ENCODE measurements at regions of chr19 and their contacts with region 1.

Region 1: GRCh38 chr19:12847159-12848139 is 9.1 kb downstream of the MAST1 start:
- DNase-seq: peak; percentile 43 to 93
- H3K4me3 ChIP-seq: peak overlapping the region in 1 of 2 donors; percentile 42
- H3K27ac ChIP-seq: no peak overlapping the region
- H3K4me1 ChIP-seq: peaks cover 0 to 9% of the 10 kb centered on the region in 2 donors
- H3K27me3 ChIP-seq: no peaks in the 10 kb centered on the region
- CTCF ChIP-seq: peak; percentile 99 to 100 (median 100)

Region 2: DNA sequence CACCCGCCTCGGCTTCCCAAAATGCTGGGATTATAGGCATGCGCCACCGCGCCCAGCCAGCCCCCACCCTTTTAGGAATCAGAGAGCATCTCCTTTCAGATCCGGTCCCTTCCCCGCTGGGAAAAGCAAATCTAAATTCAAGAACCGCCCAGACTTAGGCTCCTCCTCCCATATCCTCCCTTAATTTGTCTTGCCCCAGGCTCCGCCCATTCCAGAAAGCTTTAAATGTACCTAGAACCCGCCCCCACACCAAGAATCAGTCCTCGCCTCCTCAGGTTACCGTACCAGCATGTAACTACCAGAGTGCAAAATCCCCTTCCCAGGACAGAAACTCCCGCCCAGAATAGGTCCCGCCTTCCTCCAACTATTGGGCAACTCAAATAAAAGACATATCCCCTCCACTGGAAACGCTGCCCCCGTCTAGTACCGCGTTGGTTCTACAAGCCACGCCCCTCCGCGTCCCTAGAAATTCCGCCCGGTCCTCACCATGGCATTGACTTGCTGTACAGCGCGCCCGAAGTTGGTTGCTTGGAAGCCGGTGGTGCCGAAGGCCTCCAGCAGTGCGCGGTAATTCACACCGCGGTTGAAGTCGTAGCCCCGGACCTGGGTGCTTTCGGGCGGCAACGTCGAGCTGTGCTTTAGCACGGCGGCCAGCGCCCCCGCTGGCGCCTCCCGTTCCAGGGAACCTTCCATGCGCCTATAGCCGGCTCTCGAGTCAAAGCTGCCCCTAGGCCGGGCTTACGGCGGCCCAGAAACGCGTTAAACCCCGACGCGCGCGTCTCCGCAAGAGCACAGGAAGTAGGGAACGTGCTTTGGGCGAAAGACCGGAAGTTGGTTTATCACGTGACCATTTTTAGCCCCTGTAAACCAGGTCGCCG is 166.1 kb before region 1 on chr19 and contains the start of gene DHPS:
- intact Hi-C with region 1: loop called (anchors 2 kb)
- DNase-seq: peak; percentile 54 to 97
- H3K4me3 ChIP-seq: peak within 1 kb of the TSS; percentile 82 to 99
- H3K27ac ChIP-seq: peak within 1 kb of the TSS; percentile 93 to 98
- H3K4me1 ChIP-seq: peaks cover 0 to 9% of the 10 kb centered on the region in 2 donors
- H3K27me3 ChIP-seq: no peaks in the 10 kb centered on the region
- CTCF ChIP-seq: no peak
- total RNA-seq, gene DHPS: 160 TPM

Region 3: GRCh38 chr19:12766051-12766521 is 81.4 kb before region 1 on chr19:
- intact Hi-C with region 1: loop called (anchors 1 kb)
- DNase-seq: peak in 1 of 2 donors; percentile 91
- H3K4me3 ChIP-seq: peak overlapping the region; percentile 46 to 68
- H3K27ac ChIP-seq: peak overlapping the region; percentile 46 to 58
- H3K4me1 ChIP-seq: peaks cover 0 to 3% of the 10 kb centered on the region in 2 donors
- H3K27me3 ChIP-seq: no peaks in the 10 kb centered on the region
- CTCF ChIP-seq: peak; percentile 90 to 98 (median 94)

Region 4: GRCh38 chr19:12806239-12807081 is 41.0 kb before region 1 on chr19 and contains the start of gene RNASEH2A:
- intact Hi-C with region 1: loop called (anchors 2 kb)
- DNase-seq: peak in 1 of 2 donors; percentile 94
- H3K4me3 ChIP-seq: peak within 1 kb of the TSS; percentile 61 to 71
- H3K27ac ChIP-seq: peak within 1 kb of the TSS; percentile 6 to 31
- H3K4me1 ChIP-seq: peaks cover 3 to 8% of the 10 kb centered on the region in 2 donors
- H3K27me3 ChIP-seq: no peaks in the 10 kb centered on the region
- CTCF ChIP-seq: peak in 1 of 3 experiments; percentile 6
- total RNA-seq, gene RNASEH2A: 3.4 TPM

Region 5: DNA sequence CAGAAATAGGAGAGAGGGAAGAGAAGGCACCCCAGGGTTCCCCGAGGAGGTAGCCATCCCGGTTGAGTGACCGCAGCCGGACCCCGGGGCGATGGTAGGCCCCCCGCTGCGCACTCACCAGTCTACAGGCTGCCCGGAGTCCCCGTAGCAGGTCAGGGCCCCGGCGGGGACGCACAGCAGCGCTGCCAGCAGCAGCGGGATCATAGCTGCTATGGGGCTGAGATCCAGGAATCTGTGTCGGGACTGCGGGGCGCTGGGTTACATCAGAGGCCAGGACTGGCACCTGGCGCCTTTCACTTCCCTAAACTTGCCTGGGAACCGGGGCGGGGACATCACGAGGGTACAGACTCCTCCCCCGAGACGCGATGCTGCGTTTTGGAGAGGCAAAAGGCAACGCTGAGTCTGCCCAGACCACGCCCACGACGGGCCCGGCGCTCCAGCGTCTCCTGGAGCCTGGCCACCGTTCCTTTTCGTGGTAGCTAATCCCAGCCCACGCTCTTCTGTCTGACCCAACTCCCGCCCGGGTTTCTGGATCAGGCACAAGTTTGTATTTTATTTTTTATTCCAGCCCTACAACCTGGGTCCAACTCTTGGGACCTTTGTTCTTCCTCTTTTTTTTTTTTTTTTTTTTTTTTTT is 33.8 kb after region 1 on chr19 and contains the start of gene DNASE2:
- intact Hi-C with region 1: loop called (anchors 2 kb)
- DNase-seq: peak; percentile 91 to 98
- H3K4me3 ChIP-seq: peak within 1 kb of the TSS; percentile 61 to 74
- H3K27ac ChIP-seq: peak within 1 kb of the TSS; percentile 76 to 92
- H3K4me1 ChIP-seq: peaks cover 3 to 18% of the 10 kb centered on the region in 2 donors
- H3K27me3 ChIP-seq: peaks cover 13% of the 10 kb centered on the region
- CTCF ChIP-seq: no peak
- total RNA-seq, gene DNASE2: 76.8 TPM

Region 6: GRCh38 chr19:12938234-12939025 is 91.0 kb after region 1 on chr19 and contains the start of gene CALR:
- intact Hi-C with region 1: no loop called
- DNase-seq: peak; percentile 100
- H3K4me3 ChIP-seq: peak within 1 kb of the TSS; percentile 92 to 98
- H3K27ac ChIP-seq: peak within 1 kb of the TSS; percentile 89 to 95
- H3K4me1 ChIP-seq: peaks cover 15 to 41% of the 10 kb centered on the region in 2 donors
- H3K27me3 ChIP-seq: no peaks in the 10 kb centered on the region
- CTCF ChIP-seq: peak in 2 of 3 experiments; percentile 22 to 54
- total RNA-seq, gene CALR: 297 TPM

Region 7: DNA sequence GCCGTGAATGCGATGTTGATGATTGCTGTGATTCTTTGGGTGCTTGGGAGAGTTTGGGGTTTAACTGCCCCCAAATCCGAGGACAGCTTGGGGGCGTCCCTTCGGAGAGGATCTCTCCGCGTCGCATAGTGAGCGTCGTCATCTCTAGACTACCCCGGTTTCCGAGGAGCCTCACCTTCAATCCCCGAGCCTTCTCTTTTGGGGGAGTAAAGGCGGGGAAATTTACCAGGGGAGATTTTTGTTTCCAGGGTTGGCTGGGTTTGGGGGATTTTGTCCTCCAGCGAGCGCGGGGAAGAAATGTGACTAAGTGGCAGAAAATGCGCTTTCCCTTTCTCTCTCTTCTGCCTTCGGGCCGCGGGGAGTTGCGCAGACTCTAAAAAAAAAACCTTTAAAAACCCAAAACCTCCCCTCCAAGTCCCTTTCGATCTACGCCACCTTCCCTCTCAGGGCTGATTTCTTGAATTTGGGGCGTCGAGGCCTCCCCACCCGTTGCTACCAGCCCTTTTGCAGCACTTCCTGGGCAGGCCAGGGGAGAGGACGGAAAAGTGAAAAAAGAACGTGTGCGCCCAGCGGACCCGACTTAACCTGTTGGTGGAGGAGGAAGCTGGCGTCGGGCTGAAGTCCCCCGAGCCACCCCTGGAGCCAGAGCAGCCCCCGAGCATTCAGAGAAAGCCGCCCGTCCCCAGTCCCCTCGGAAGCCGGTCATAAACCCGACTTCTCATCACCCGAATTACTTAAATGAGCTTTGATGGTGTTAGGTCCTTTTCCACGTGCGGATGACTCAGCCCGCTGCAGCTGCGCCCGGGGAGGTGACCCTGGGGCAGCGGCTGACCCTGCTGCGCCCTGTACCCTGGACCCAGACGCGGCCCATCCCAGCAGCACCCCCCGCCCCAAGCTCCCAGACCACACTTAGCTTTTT is 165.5 kb after region 1 on chr19:
- intact Hi-C with region 1: no loop called
- DNase-seq: peak in 1 of 2 donors; percentile 85
- H3K4me3 ChIP-seq: peak overlapping the region; percentile 57 to 62
- H3K27ac ChIP-seq: peak overlapping the region; percentile 95 to 97
- H3K4me1 ChIP-seq: peaks cover 29 to 69% of the 10 kb centered on the region in 2 donors
- H3K27me3 ChIP-seq: no peaks in the 10 kb centered on the region
- CTCF ChIP-seq: no peak